IMR-90 (cell line): ENCODE measurements at regions of chr2 and their contacts with region 1.

Region 1: GRCh38 chr2:124877141-124877577 is 852.1 kb downstream of the CNTNAP5 start:
- DNase-seq: peak; percentile 81
- ATAC-seq: peak; percentile 96
- H3K4me3 ChIP-seq: no peak overlapping the region
- H3K27ac ChIP-seq: no peak overlapping the region
- H3K4me1 ChIP-seq: no peaks in the 10 kb centered on the region
- H3K27me3 ChIP-seq: no peaks in the 10 kb centered on the region
- CTCF ChIP-seq: no peak
- POLR2A ChIP-seq: no peak
- RAD21 ChIP-seq: no peak

Region 2: GRCh38 chr2:124753842-124754241 is 123.3 kb before region 1 on chr2:
- CTCF ChIA-PET with region 1: no interaction called
- POLR2A ChIA-PET with region 1: no interaction called
- dilution Hi-C with region 1: no loop called
- in situ Hi-C with region 1: no loop called
- intact Hi-C with region 1: no loop called
- DNase-seq: no peak
- ATAC-seq: no peak
- H3K4me3 ChIP-seq: no peak overlapping the region
- H3K27ac ChIP-seq: no peak overlapping the region
- H3K4me1 ChIP-seq: no peaks in the 10 kb centered on the region
- H3K27me3 ChIP-seq: no peaks in the 10 kb centered on the region
- CTCF ChIP-seq: no peak
- POLR2A ChIP-seq: no peak
- RAD21 ChIP-seq: no peak

Region 3: GRCh38 chr2:124804014-124804940 is 72.9 kb before region 1 on chr2:
- CTCF ChIA-PET with region 1: no interaction called
- POLR2A ChIA-PET with region 1: no interaction called
- dilution Hi-C with region 1: no loop called
- in situ Hi-C with region 1: no loop called
- intact Hi-C with region 1: no loop called
- DNase-seq: peak; percentile 25
- ATAC-seq: peak; percentile 49; the same call in 1 of the 2 replicates
- H3K4me3 ChIP-seq: no peak overlapping the region
- H3K27ac ChIP-seq: no peak overlapping the region
- H3K4me1 ChIP-seq: no peaks in the 10 kb centered on the region; the same call in 1 of the 2 replicates
- H3K27me3 ChIP-seq: no peaks in the 10 kb centered on the region
- CTCF ChIP-seq: peak; percentile 47
- POLR2A ChIP-seq: no peak
- RAD21 ChIP-seq: peak; percentile 42

Region 4: DNA sequence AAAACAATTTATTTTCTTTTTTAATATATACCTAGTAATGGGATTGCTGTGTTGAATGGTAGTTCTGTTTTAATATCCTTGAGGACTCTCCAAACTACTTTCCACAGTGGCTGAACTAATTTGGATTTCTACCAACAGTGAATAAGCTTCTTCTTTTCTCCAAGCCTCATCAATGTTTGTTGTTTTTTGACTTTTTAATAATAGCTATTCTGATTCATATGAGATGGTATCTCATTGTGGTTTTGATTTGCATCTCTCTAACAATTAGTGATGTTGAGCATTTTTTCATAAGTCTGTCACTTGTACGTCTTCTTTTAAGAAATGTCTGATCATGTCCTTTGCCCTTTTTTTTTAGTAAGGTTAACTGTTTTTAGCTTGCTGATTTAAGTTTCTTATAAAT is 11.3 kb after region 1 on chr2:
- CTCF ChIA-PET with region 1: interaction called, 3 read pairs
- POLR2A ChIA-PET with region 1: no interaction called
- dilution Hi-C with region 1: no loop called
- in situ Hi-C with region 1: no loop called
- intact Hi-C with region 1: loop called (anchors 1 kb)
- DNase-seq: no peak
- ATAC-seq: no peak
- H3K4me3 ChIP-seq: no peak overlapping the region
- H3K27ac ChIP-seq: no peak overlapping the region
- H3K4me1 ChIP-seq: no peaks in the 10 kb centered on the region
- H3K27me3 ChIP-seq: no peaks in the 10 kb centered on the region
- CTCF ChIP-seq: no peak
- POLR2A ChIP-seq: no peak
- RAD21 ChIP-seq: no peak